Caco-2 (cell line): ENCODE measurements at regions of chr14 and their contacts with region 1.

Region 1: GRCh38 chr14:67526676-67527459 is 6.2 kb upstream of the PLEKHH1 start:
- DNase-seq: peak; percentile 72 to 76
- H3K4me3 ChIP-seq: no peak overlapping the region
- H3K4me3 Mint-ChIP-seq: no peak overlapping the region
- H3K27ac Mint-ChIP-seq: peak overlapping the region; percentile 19
- H3K4me1 ChIP-seq: no peaks in the 10 kb centered on the region; the same call in 1 of the 2 replicates
- H3K4me1 Mint-ChIP-seq: no peaks in the 10 kb centered on the region
- H3K27me3 ChIP-seq: no peaks in the 10 kb centered on the region
- H3K27me3 Mint-ChIP-seq: no peaks in the 10 kb centered on the region
- CTCF ChIP-seq: peak; percentile 67 to 90

Region 2: GRCh38 chr14:67426983-67427606 is 99.8 kb before region 1 on chr14:
- CTCF ChIA-PET with region 1: interaction called, 30 read pairs
- POLR2A ChIA-PET with region 1: no interaction called
- intact Hi-C with region 1: loop called (anchors 2 kb)
- DNase-seq: peak; percentile 84 to 85
- H3K4me3 ChIP-seq: no peak overlapping the region
- H3K4me3 Mint-ChIP-seq: no peak overlapping the region
- H3K27ac Mint-ChIP-seq: no peak overlapping the region
- H3K4me1 ChIP-seq: peaks cover 27% of the 10 kb centered on the region
- H3K4me1 Mint-ChIP-seq: peaks cover 10% of the 10 kb centered on the region
- H3K27me3 ChIP-seq: no peaks in the 10 kb centered on the region
- H3K27me3 Mint-ChIP-seq: no peaks in the 10 kb centered on the region
- CTCF ChIP-seq: peak; percentile 78 to 82

Region 3: DNA sequence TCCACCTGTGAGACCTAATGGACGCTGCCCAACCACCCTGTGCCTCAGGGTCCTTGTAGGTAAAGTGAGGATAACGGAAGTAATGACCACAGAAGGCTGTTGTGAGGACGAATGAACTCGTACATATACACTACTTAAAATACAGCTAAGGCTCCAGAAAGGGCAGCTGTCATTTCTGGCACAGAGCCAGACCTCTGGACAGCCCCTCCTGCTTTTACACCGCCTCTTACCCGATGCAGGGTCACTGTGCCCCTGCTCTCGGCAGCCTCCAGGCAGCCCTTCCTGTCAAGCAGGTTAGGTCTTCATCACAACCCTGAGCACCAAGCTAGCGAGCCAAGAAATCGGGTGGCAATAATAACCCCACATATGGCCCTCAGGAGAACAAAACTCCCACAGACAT is 46.9 kb before region 1 on chr14:
- CTCF ChIA-PET with region 1: no interaction called
- POLR2A ChIA-PET with region 1: no interaction called
- intact Hi-C with region 1: no loop called
- DNase-seq: no peak
- H3K4me3 ChIP-seq: no peak overlapping the region
- H3K4me3 Mint-ChIP-seq: no peak overlapping the region
- H3K27ac Mint-ChIP-seq: no peak overlapping the region
- H3K4me1 ChIP-seq: no peaks in the 10 kb centered on the region
- H3K4me1 Mint-ChIP-seq: no peaks in the 10 kb centered on the region
- H3K27me3 ChIP-seq: no peaks in the 10 kb centered on the region
- H3K27me3 Mint-ChIP-seq: no peaks in the 10 kb centered on the region
- CTCF ChIP-seq: no peak

Region 4: DNA sequence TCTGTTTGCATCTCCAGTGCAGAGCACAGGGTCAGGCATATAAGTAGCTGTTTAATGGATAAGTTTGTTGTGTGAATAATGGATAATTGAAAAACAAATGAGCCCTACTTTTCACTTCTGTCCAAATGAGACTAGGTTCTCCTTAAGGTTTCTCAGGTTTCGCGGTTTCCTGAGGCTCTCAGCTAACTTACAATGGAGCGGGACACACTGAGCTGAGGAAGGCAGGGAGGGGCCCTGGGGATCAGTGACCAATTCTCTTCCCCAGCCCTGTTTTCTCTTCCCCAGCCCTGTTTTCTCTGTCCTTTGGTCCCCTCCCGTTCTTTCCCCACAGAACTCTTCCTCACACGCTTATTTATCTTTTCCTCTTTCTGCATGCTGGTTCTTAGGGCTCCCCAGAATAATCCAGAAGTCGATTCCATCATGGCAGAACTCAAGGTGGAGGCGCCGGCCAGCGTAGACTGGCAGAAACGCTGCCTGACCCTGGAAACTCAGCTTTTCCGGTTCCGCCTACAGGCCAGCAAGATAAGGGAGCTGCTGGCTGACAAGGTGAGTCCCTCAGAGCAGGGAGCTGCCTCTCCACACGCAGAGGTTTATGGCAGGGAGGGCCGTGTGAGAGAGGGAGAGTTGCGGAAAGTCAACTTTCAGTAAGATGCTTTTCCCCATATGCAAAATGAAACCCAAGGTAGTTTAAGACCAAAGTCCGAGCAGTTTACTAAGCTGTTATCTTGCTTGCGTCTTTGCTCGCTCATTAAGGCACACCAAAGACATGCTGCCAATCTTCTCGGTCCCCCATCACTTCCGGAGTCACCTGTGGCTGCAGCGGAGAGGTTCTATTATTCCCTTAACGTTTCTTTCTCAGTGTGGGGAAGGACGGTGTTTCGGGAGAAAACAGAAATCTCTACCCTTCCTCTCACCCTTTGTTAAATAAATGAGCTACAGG is 14.8 kb after region 1 on chr14:
- CTCF ChIA-PET with region 1: interaction called, 20 read pairs
- POLR2A ChIA-PET with region 1: interaction called, 6 read pairs
- intact Hi-C with region 1: no loop called
- DNase-seq: peak; percentile 83 to 91
- H3K4me3 ChIP-seq: peak overlapping the region; percentile 37
- H3K4me3 Mint-ChIP-seq: peak overlapping the region; percentile 84
- H3K27ac Mint-ChIP-seq: peak overlapping the region; percentile 95
- H3K4me1 ChIP-seq: peaks cover 7% of the 10 kb centered on the region; the same call in 1 of the 2 replicates
- H3K4me1 Mint-ChIP-seq: peaks cover 7% of the 10 kb centered on the region
- H3K27me3 ChIP-seq: no peaks in the 10 kb centered on the region
- H3K27me3 Mint-ChIP-seq: no peaks in the 10 kb centered on the region
- CTCF ChIP-seq: no peak

Region 5: DNA sequence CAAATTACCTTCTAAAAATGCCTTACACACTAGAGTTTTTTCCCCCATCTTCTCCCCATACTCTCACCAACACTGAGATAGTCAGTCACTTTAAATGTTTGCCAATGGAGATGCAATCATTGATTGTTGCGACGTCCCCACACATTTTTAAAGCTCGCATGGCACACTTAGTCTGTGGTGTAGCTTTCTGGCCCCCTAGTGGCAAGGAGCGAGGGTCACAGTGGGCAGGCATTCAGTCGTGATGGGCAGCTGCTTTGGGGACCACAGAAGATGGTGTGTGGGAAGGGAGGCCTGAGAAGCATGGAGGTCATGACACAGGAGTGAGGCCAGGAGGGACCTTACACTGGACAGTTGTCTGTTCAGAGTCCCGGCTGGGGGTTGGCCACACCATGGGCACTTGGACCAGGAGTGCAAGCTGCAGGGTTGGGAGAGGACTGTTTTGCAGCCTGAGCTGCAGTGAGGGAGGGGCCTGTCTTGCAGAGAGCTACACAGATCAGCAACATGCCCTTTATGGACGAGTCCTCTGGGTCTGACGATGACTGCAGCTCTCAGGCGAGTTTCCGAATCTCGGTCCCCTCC is 44.5 kb after region 1 on chr14:
- CTCF ChIA-PET with region 1: interaction called, 110 read pairs
- POLR2A ChIA-PET with region 1: interaction called, 4 read pairs
- intact Hi-C with region 1: loop called (anchors 1 kb)
- DNase-seq: peak; percentile 68 to 77
- H3K4me3 ChIP-seq: no peak overlapping the region
- H3K4me3 Mint-ChIP-seq: no peak overlapping the region
- H3K27ac Mint-ChIP-seq: no peak overlapping the region
- H3K4me1 ChIP-seq: 0 out of 2 replicates have a peak, but pooled peaks cover 4% of the 10 kb centered on the region
- H3K4me1 Mint-ChIP-seq: peaks cover 14% of the 10 kb centered on the region
- H3K27me3 ChIP-seq: no peaks in the 10 kb centered on the region
- H3K27me3 Mint-ChIP-seq: no peaks in the 10 kb centered on the region
- CTCF ChIP-seq: peak; percentile 84 to 88

Region 6: DNA sequence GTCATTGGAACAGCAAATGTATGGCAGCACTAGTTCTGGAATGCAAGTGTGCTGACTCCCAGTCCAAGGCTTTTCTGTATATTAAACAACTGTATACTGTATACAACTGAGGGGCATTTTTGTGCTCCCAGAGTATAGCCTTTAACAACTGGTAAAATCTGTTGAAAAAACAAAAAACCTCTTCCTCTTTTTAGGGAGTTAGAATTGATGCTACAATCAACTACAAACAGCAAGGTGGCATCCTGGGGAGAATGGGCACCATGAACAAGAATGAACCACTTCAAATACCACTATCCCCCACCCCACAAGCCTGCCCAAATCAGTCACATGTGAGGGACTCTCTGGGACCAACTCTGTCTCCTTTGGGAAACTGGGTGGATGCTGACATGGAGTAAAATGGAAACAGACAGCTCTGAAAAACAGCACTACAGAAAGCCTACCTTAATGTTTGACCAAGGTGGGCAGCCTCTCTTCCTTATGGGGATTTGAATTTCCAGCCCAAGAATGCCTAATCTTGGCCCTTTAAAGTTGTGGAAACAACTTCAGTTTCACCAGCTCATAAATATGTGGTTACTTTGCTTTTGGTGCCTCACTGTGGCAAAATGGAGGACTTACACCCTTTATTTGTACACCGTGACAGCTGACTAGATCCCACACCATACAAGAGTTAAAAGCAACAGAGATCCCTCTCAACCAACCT is 140.0 kb after region 1 on chr14:
- CTCF ChIA-PET with region 1: interaction called, 18 read pairs
- POLR2A ChIA-PET with region 1: no interaction called
- intact Hi-C with region 1: loop called (anchors 5 kb)
- DNase-seq: peak in 1 of 2 experiments; percentile 45
- H3K4me3 ChIP-seq: no peak overlapping the region
- H3K4me3 Mint-ChIP-seq: no peak overlapping the region
- H3K27ac Mint-ChIP-seq: no peak overlapping the region
- H3K4me1 ChIP-seq: no peaks in the 10 kb centered on the region
- H3K4me1 Mint-ChIP-seq: no peaks in the 10 kb centered on the region
- H3K27me3 ChIP-seq: no peaks in the 10 kb centered on the region
- H3K27me3 Mint-ChIP-seq: no peaks in the 10 kb centered on the region
- CTCF ChIP-seq: peak; percentile 58 to 62